Activated naive CD4-positive, alpha-beta T cell treated with anti-CD3 and anti-CD28 coated beads for 36 hours (primary cell): ENCODE measurements at regions of chr7 and their contacts with region 1.

Region 1: DNA sequence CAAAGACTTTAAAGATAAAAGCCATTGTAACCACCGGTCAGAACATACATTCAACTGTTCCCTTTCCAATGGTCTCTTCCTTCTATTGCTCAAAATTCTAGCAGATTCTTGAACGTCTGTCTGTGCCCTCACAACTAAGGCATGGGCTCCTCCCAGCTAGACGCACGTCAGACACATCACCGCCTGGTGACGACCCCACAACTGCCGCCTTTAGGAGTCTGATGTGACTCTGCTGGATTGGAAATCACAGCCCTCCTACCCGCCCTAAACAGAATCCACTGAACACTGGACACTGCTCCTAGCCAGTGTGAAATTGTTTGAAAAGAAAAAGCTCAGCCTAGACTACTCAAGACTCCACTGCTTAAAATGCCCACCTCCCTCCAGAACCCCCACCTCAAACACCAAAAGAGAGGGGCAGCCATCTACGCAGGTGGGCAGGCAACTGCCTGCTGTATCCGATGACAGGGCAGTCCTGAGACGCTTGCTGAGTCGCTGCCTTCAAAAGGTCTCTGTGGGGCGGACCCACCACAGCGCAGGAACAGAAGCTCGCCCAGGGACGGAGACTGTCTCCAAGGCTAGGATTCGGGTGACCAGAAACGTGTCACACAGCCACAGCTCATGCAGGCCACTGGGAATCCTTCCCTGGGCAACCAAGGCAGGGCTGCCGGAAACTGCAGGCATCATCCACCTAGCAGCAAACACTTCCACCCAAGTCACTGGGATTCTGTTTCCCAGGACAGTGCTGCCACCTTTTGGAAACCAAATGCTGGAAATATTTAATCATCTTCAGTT is 34.7 kb downstream of the GSDME start:
- DNase-seq: no peak
- H3K4me3 Mint-ChIP-seq: no peak overlapping the region
- H3K27ac Mint-ChIP-seq: no peak overlapping the region
- H3K4me1 Mint-ChIP-seq: peaks cover 8% of the 10 kb centered on the region
- H3K27me3 Mint-ChIP-seq: peaks cover 12% of the 10 kb centered on the region

Region 2: GRCh38 chr7:24778543-24779282 is 56.1 kb after region 1 on chr7:
- CTCF ChIA-PET with region 1: no interaction called
- intact Hi-C with region 1: loop called (anchors 5 kb)
- DNase-seq: peak; percentile 58
- H3K4me3 Mint-ChIP-seq: no peak overlapping the region
- H3K27ac Mint-ChIP-seq: peak overlapping the region; percentile 60
- H3K4me1 Mint-ChIP-seq: peaks cover 12% of the 10 kb centered on the region
- H3K27me3 Mint-ChIP-seq: peaks cover 2% of the 10 kb centered on the region

Region 3: DNA sequence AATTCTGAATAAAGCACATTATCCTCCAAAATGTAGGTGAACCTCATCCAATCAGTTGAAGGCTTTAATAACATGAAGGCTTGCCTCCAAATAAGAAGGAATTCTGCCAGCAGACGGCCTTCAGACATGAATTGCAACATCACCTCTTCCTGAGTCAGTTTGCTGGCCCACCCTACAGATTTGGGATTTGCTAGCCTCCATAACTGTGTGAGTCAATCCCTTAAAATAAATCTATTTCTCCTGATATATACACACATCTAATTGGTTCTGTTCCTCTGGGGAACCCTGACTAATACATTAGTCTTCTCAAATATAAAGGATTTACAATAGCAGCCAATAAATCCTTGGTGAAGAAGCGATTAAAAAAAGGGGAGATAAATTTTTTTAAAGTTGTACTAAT is 292.2 kb after region 1 on chr7:
- CTCF ChIA-PET with region 1: no interaction called
- intact Hi-C with region 1: no loop called
- DNase-seq: no peak
- H3K4me3 Mint-ChIP-seq: no peak overlapping the region
- H3K27ac Mint-ChIP-seq: no peak overlapping the region
- H3K4me1 Mint-ChIP-seq: peaks cover 3% of the 10 kb centered on the region
- H3K27me3 Mint-ChIP-seq: no peaks in the 10 kb centered on the region